Heart right ventricle (tissue), 16 donors: ENCODE measurements at regions of chr3 and their contacts with region 1.

Region 1: DNA sequence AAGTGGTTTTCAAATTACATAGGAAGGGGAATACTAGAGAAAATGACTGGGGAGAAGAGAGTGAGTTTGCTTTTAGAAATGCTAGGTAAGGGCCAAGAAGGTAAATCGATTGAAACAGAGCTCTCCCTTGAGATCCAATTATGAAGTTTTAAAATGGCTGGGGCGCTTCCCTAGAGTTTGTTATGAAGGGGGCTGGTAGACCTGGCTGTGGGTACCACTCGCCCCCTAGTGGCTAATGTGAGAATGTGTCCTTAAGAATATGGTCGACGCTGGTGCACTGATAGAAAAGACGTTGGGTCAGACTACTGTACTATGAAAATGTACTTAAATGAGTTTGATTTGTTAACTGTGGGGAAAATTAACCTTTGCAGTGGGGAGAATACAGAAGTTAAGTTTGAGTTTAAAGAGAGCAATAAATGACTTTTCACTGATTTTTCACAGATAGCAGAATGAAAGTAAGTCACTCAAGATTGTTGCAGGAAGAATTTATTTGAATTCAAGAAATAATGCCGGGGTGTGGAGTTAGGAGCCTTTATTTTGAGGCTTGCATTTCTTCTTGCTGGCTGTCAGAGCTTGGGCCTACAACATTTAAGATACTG is 9.2 kb downstream of the TMPRSS7 start:
- DNase-seq: peak in 1 of 2 donors; percentile 46
- ATAC-seq: peak; percentile 84 to 95 (median 93)
- H3K4me3 ChIP-seq: peak overlapping the region in 3 of 10 donors; percentile 5 to 25 (median 11)
- H3K27ac ChIP-seq: no peak overlapping the region
- H3K4me1 ChIP-seq: peaks cover 0 to 9% (median 0%) of the 10 kb centered on the region in 9 donors
- H3K27me3 ChIP-seq: no peaks in the 10 kb centered on the region
- CTCF ChIP-seq: peak; percentile 71 to 93 (median 87)

Region 2: GRCh38 chr3:111668912-111669488 is 374.7 kb before region 1 on chr3:
- intact Hi-C with region 1: loop called in 2 of 10 experiments (anchors 2 to 10 kb)
- DNase-seq: no peak
- ATAC-seq: peak; percentile 53 to 90 (median 86)
- H3K4me3 ChIP-seq: no peak overlapping the region
- H3K27ac ChIP-seq: peak overlapping the region in 4 of 10 donors; percentile 3 to 20 (median 8)
- H3K4me1 ChIP-seq: peaks cover 0 to 30% (median 3%) of the 10 kb centered on the region in 9 donors
- H3K27me3 ChIP-seq: no peaks in the 10 kb centered on the region
- CTCF ChIP-seq: peak; percentile 51 to 87 (median 75)

Region 3: GRCh38 chr3:111989061-111989678 is 54.5 kb before region 1 on chr3:
- intact Hi-C with region 1: loop called in 7 of 10 experiments (anchors 2 to 10 kb)
- DNase-seq: no peak
- ATAC-seq: peak in 7 of 8 donors; percentile 58 to 83 (median 75)
- H3K4me3 ChIP-seq: no peak overlapping the region
- H3K27ac ChIP-seq: peak overlapping the region in 1 of 10 donors; percentile 9
- H3K4me1 ChIP-seq: peaks cover 0 to 13% (median 0%) of the 10 kb centered on the region in 9 donors
- H3K27me3 ChIP-seq: no peaks in the 10 kb centered on the region
- CTCF ChIP-seq: peak; percentile 43 to 84 (median 71)

Region 4: DNA sequence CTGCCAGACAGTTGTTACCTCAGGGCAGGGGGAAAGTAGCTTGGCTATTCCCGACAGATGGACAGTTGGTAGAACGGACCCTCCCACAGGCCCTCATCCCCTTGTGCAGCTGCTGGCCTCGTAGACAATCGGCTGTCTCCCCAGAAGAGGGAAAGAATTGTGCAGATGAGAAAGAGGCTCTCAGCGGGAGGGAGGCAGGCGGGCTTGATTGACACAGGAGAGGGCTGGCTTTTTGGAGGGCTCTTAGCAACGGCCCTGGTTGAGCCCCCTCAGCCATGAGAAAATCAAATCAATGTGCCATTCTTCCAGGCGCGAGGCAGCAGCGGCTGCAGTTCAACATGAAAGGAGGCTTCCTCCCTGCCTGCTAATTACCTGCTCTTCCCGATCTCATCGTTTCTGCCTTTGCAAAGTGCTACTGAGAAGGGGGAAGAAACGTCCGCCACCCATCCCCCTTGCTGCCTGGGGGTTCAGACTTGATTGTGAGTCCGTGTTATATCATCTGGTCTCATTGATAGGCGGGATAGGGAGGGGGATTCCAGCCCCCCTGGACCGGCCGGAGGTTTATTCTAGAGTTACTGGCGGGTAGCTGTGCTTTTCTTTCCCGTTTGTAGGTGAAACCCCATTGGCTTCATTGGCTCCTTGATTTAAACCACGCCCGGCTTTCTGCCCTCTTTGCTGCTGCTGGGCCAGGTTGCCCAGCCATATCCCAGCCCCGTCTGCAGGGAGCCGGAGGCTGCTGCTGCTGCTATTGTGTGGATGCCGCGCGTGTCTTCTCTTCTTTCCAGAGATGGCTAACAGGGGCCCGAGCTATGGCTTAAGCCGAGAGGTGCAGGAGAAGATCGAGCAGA is 44.8 kb before region 1 on chr3 and contains the start of gene TAGLN3:
- intact Hi-C with region 1: loop called in 1 of 10 experiments (anchors 10 kb)
- DNase-seq: peak in 1 of 2 donors; percentile 12
- ATAC-seq: peak in 7 of 8 donors; percentile 28 to 72 (median 56)
- H3K4me3 ChIP-seq: peak within 1 kb of the TSS in 9 of 10 donors; percentile 26 to 57 (median 48)
- H3K27ac ChIP-seq: no peak within 1 kb of the TSS
- H3K4me1 ChIP-seq: peaks cover 0 to 23% (median 13%) of the 10 kb centered on the region in 9 donors
- H3K27me3 ChIP-seq: peaks cover 0 to 30% (median 0%) of the 10 kb centered on the region in 7 donors
- CTCF ChIP-seq: no peak
- total RNA-seq, gene TAGLN3: 0.36 to 1.1 (median 0.58) TPM in 7 of 10 donors, not detected in the others

Region 5: GRCh38 chr3:112013058-112013783 is 30.5 kb before region 1 on chr3:
- intact Hi-C with region 1: no loop called
- DNase-seq: peak; percentile 46 to 69
- ATAC-seq: peak; percentile 75 to 90 (median 85)
- H3K4me3 ChIP-seq: peak overlapping the region in 2 of 10 donors; percentile 6 to 13
- H3K27ac ChIP-seq: peak overlapping the region; percentile 10 to 82 (median 59)
- H3K4me1 ChIP-seq: peaks cover 0 to 45% (median 27%) of the 10 kb centered on the region in 9 donors
- H3K27me3 ChIP-seq: no peaks in the 10 kb centered on the region
- CTCF ChIP-seq: peak; percentile 46 to 89 (median 75)